ENCODE measurements at regions of chr1 and their contacts with region 1.

Region 1: DNA sequence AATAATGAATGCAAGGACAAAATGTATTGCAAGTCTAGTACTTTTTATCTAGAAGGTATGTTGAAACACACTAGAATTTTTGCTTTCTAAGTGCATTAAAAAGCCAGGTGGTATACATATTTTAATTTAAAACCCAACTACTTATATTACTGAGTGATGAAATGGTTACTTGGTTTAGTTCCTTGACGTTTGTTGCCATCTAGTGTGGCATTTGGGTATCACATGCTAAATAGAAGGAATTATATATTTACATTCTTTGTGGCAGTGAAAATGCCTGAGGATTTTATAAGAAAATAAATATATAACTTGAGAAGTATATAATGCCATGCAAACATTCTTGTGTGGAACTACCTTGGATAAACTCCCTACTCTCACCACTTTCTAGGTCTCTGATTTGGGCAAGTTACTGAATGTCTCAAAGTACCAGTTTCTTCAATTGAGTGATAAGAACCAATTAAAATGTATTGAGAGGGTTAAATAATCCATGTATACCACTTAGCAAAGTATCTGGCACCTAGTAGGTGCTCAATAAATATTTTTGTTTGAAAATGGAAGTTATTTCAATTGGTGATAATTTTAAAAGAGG is 69.6 kb downstream of the SDCCAG8 start:
- DNase-seq: peak; percentile 42 to 75 (median 52)
- ATAC-seq: peak; percentile 73
- H3K4me3 ChIP-seq: no peak overlapping the region
- H3K27ac ChIP-seq: no peak overlapping the region
- H3K4me1 ChIP-seq: no peaks in the 10 kb centered on the region
- H3K27me3 ChIP-seq: no peaks in the 10 kb centered on the region
- CTCF ChIP-seq: peak; percentile 53 to 89 (median 62); a peak in 4 of 6 replicates
- EP300 ChIP-seq: no peak
- POLR2A ChIP-seq: no peak
- RAD21 ChIP-seq: peak; percentile 96

Region 2: DNA sequence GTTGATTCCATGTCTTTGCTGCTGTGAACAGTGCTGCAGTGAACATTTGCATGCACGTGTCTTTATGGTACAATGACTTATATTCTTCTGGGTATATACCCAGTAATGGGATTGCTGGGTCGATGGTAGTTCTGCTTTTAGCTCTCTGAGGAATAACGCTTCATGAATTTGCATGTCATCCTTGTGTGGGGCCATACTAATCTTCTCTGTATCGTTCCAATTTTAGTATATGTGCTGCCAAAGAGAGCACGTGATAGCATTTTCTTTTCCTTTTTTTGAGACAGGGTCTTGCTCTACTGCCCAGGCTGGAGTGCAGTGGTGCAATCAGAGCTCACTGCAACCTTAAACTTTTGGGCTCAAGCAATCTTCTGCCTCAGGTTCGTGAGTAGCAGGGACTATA is 1301.6 kb before region 1 on chr1:
- CTCF ChIA-PET with region 1: interaction called, 5 read pairs
- POLR2A ChIA-PET with region 1: no interaction called
- in situ Hi-C with region 1: no loop called
- intact Hi-C with region 1: loop called (anchors 10 kb)
- DNase-seq: no peak
- ATAC-seq: no peak
- H3K4me3 ChIP-seq: no peak overlapping the region
- H3K27ac ChIP-seq: no peak overlapping the region
- H3K4me1 ChIP-seq: no peaks in the 10 kb centered on the region; a peak in 1 of 5 replicates
- H3K27me3 ChIP-seq: peaks cover 7 to 8% of the 10 kb centered on the region in 2 experiments; a peak in 4 of 5 replicates
- CTCF ChIP-seq: no peak
- EP300 ChIP-seq: no peak
- POLR2A ChIP-seq: no peak
- RAD21 ChIP-seq: no peak

Region 3: DNA sequence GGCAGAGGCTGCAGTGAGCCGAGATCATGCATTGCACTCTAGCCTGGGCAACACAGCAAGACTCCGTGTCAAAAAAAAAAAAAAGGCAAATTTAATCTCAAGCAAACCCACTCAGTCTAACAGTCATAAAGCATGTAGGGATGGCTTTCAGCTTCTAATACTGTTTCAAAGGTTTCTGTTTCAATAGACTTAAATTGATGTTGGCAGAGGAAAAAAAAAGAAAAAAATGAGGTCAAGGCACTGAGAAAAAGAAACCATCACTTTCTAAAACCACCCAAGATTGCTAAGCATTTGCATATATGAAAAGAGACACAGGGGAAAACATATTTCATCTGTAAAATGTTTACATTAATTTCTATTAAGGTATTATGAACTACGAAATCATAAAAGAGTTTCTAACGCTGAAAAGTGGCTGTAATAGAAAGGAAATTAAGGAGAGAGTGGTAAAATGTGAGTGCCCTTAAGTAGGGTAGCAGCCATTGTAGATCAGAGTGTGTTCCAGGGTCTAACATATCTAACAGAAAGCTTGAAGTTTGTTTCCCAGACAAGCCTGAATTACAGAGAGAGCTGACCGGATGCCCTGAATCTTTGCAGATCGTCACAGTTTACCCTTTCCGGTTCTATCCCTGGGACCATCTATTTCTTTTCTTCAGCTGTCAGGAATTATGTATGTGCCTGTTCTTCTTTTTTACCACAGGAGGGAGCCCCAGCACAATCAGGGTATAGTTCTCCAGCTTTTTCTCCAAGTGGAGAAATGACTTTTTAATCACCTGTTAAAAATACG is 870.9 kb before region 1 on chr1:
- CTCF ChIA-PET with region 1: interaction called, 9 read pairs
- POLR2A ChIA-PET with region 1: no interaction called
- in situ Hi-C with region 1: loop called (anchors 10 kb)
- intact Hi-C with region 1: no loop called
- DNase-seq: peak; percentile 45 to 52 (median 50)
- ATAC-seq: peak; percentile 86
- H3K4me3 ChIP-seq: no peak overlapping the region
- H3K27ac ChIP-seq: no peak overlapping the region
- H3K4me1 ChIP-seq: no peaks in the 10 kb centered on the region
- H3K27me3 ChIP-seq: no peaks in the 10 kb centered on the region
- CTCF ChIP-seq: peak; percentile 56 to 76 (median 66)
- EP300 ChIP-seq: no peak
- POLR2A ChIP-seq: no peak
- RAD21 ChIP-seq: peak; percentile 50 to 70

Region 4: GRCh38 chr1:242467556-242468145 is 857.7 kb before region 1 on chr1:
- CTCF ChIA-PET with region 1: interaction called, 10 read pairs
- POLR2A ChIA-PET with region 1: no interaction called
- in situ Hi-C with region 1: no loop called
- intact Hi-C with region 1: loop called (anchors 1 kb)
- DNase-seq: peak; percentile 42 to 54 (median 50)
- ATAC-seq: peak; percentile 88
- H3K4me3 ChIP-seq: no peak overlapping the region
- H3K27ac ChIP-seq: no peak overlapping the region
- H3K4me1 ChIP-seq: no peaks in the 10 kb centered on the region
- H3K27me3 ChIP-seq: no peaks in the 10 kb centered on the region
- CTCF ChIP-seq: peak; percentile 50 to 59 (median 58)
- EP300 ChIP-seq: no peak
- POLR2A ChIP-seq: no peak
- RAD21 ChIP-seq: peak; percentile 34 to 67

Region 5: GRCh38 chr1:242847390-242847993 is 477.9 kb before region 1 on chr1:
- CTCF ChIA-PET with region 1: no interaction called
- POLR2A ChIA-PET with region 1: no interaction called
- in situ Hi-C with region 1: loop called (anchors 25 kb)
- intact Hi-C with region 1: no loop called
- DNase-seq: peak in 1 of 4 experiments; percentile 25
- ATAC-seq: no peak
- H3K4me3 ChIP-seq: no peak overlapping the region
- H3K27ac ChIP-seq: no peak overlapping the region
- H3K4me1 ChIP-seq: no peaks in the 10 kb centered on the region
- H3K27me3 ChIP-seq: no peaks in the 10 kb centered on the region
- CTCF ChIP-seq: no peak
- EP300 ChIP-seq: no peak
- POLR2A ChIP-seq: no peak
- RAD21 ChIP-seq: no peak

Measured in K562 (cell line).